T-cell (primary cell): ENCODE measurements at regions of chr22 and their contacts with region 1.

Region 1: DNA sequence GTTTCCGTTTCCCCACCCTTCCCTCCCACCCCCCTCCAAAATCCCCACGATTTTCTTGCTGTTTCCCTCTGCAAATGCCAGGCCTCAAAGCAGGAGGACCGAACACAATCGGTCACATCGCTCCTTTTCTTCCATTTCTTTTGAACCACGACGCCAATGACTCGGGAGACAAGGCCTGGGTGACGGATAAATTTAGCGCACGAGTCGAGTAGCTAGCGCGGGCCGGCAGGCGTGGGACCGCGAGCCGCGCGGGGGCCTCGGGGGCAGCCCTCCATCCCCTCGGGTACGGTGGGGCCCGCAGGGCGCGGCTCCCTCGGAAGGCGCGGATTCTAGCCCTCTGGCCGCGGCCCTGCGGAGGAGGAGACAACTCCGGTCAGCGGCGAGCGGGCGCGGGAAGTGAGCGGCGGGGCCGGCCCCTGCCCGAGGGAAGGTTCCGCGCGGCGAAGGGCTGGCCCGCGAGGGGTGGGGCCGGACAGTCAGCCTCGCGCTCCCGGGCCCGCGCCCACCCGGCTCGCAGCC is 414 bp downstream of the JOSD1 start:
- DNase-seq: peak in 7 of 35 experiments; percentile 8 to 62 (median 13)
- ATAC-seq: peak in 2 of 4 experiments; percentile 0 to 12
- H3K4me3 ChIP-seq: peak overlapping the region; percentile 54 to 61
- H3K4me3 Mint-ChIP-seq: peak overlapping the region; percentile 82 to 97 (median 91)
- H3K27ac ChIP-seq: peak overlapping the region; percentile 87
- H3K27ac Mint-ChIP-seq: peak overlapping the region; percentile 85 to 91
- H3K4me1 ChIP-seq: peaks cover 26 to 52% of the 10 kb centered on the region in 2 experiments
- H3K4me1 Mint-ChIP-seq: peaks cover 48 to 68% (median 60%) of the 10 kb centered on the region in 3 donors
- H3K27me3 ChIP-seq: no peaks in the 10 kb centered on the region
- H3K27me3 Mint-ChIP-seq: no peaks in the 10 kb centered on the region

Region 2: DNA sequence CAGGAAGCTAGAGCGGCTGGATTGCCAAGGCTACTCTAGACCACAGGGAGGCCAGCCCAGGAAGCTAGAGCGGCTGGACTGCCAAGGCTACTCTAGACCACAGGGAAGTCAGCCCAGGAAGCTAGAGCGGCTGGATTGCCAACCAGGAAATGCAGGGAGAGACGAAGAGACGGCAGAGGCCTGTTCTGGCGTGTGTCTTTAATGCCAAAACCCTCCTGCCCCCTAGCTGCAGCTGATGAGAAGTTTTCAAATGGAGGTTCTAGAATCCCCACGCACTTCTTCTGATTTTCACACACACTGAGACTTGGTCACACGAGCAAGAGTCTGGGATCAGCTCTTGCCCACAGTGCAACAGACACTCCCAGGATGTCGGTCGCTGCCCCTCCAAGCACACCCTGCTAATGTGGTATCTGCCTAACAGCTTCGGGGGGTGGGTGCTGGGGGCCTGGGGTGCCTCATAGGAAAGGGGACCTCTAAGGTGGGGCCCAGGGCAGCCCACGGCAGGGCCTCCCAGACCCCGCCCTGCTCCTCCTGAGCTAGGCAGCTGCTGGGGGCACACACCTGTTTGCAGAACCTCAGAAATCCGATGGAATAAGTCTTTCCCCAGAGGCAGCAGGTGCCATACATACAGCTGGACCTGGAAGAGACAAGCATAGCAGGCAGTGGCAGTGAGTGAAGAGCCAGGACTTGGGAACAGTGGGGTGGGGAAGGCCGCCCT is 470.1 kb before region 1 on chr22:
- CTCF ChIA-PET with region 1: no interaction called
- POLR2A ChIA-PET with region 1: no interaction called
- DNase-seq: peak in 29 of 35 experiments; percentile 15 to 66 (median 38)
- ATAC-seq: peak; percentile 33 to 64 (median 48)
- H3K4me3 ChIP-seq: no peak overlapping the region
- H3K4me3 Mint-ChIP-seq: no peak overlapping the region
- H3K27ac ChIP-seq: no peak overlapping the region
- H3K27ac Mint-ChIP-seq: peak overlapping the region in 1 of 2 donors; percentile 66
- H3K4me1 ChIP-seq: peaks cover 0 to 17% of the 10 kb centered on the region in 2 experiments
- H3K4me1 Mint-ChIP-seq: peaks cover 3 to 17% (median 12%) of the 10 kb centered on the region in 3 donors
- H3K27me3 ChIP-seq: no peaks in the 10 kb centered on the region
- H3K27me3 Mint-ChIP-seq: no peaks in the 10 kb centered on the region

Region 3: GRCh38 chr22:38681784-38682335 is 18.5 kb before region 1 on chr22 and contains the start of gene TOMM22:
- CTCF ChIA-PET with region 1: interaction called in 1 of 2 experiments, 25 read pairs
- POLR2A ChIA-PET with region 1: interaction called, 9 to 20 read pairs
- DNase-seq: peak; percentile 54 to 90 (median 77)
- ATAC-seq: peak; percentile 94 to 98 (median 97)
- H3K4me3 ChIP-seq: peak within 1 kb of the TSS; percentile 96
- H3K4me3 Mint-ChIP-seq: peak within 1 kb of the TSS; percentile 95 to 97 (median 96)
- H3K27ac ChIP-seq: peak within 1 kb of the TSS; percentile 86
- H3K27ac Mint-ChIP-seq: peak within 1 kb of the TSS; percentile 94
- H3K4me1 ChIP-seq: peaks cover 5 to 17% of the 10 kb centered on the region in 2 experiments
- H3K4me1 Mint-ChIP-seq: peaks cover 19 to 24% (median 23%) of the 10 kb centered on the region in 3 donors
- H3K27me3 ChIP-seq: peaks cover 0 to 4% of the 10 kb centered on the region in 2 experiments
- H3K27me3 Mint-ChIP-seq: no peaks in the 10 kb centered on the region
- total RNA-seq, gene TOMM22: 52.4 to 58.1 (median 53.3) TPM

Region 4: GRCh38 chr22:39215426-39216120 is 515.2 kb after region 1 on chr22:
- CTCF ChIA-PET with region 1: no interaction called
- POLR2A ChIA-PET with region 1: no interaction called
- DNase-seq: peak in 29 of 35 experiments; percentile 20 to 68 (median 37)
- ATAC-seq: peak; percentile 49 to 89 (median 66)
- H3K4me3 ChIP-seq: no peak overlapping the region
- H3K4me3 Mint-ChIP-seq: no peak overlapping the region
- H3K27ac ChIP-seq: no peak overlapping the region
- H3K27ac Mint-ChIP-seq: peak overlapping the region in 1 of 2 donors; percentile 28
- H3K4me1 ChIP-seq: peaks cover 0 to 12% of the 10 kb centered on the region in 2 experiments
- H3K4me1 Mint-ChIP-seq: peaks cover 0 to 7% (median 4%) of the 10 kb centered on the region in 3 donors
- H3K27me3 ChIP-seq: peaks cover 0 to 30% of the 10 kb centered on the region in 2 experiments
- H3K27me3 Mint-ChIP-seq: peaks cover 18 to 21% of the 10 kb centered on the region in 2 donors